Calu3 (cell line): ENCODE measurements at regions of chr5 and their contacts with region 1.

Region 1: GRCh38 chr5:94672746-94673145 is 54.3 kb downstream of the SLF1 start:
- DNase-seq: no peak
- H3K4me3 Mint-ChIP-seq: no peak overlapping the region
- H3K27ac Mint-ChIP-seq: no peak overlapping the region
- H3K4me1 Mint-ChIP-seq: peaks cover 8% of the 10 kb centered on the region
- H3K27me3 Mint-ChIP-seq: no peaks in the 10 kb centered on the region
- CTCF ChIP-seq: no peak

Region 2: GRCh38 chr5:94544031-94544650 is 128.6 kb before region 1 on chr5:
- CTCF ChIA-PET with region 1: no interaction called
- intact Hi-C with region 1: no loop called
- DNase-seq: no peak
- H3K4me3 Mint-ChIP-seq: no peak overlapping the region
- H3K27ac Mint-ChIP-seq: no peak overlapping the region
- H3K4me1 Mint-ChIP-seq: no peaks in the 10 kb centered on the region
- H3K27me3 Mint-ChIP-seq: no peaks in the 10 kb centered on the region
- CTCF ChIP-seq: no peak

Region 3: DNA sequence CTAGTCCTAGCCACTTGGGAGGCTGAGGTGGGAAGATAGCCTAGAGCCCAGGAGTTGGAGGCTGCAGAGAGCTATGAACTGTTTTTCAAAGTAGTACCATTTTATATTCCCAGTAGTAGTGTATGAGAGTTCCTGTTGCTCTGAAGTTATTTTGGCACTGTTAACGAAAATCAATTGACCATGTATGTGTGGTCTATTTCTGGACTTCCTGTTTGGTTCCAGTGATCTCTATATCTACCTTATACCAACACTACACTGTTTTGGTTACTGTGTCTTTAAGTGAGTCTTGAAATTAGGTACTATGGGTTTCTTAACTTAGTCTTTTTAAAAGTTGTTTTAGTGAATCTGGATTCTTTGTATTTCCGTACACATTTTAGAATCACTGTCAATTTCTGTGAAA is 40.7 kb before region 1 on chr5:
- CTCF ChIA-PET with region 1: no interaction called
- intact Hi-C with region 1: loop called (anchors 1 kb)
- DNase-seq: no peak
- H3K4me3 Mint-ChIP-seq: no peak overlapping the region
- H3K27ac Mint-ChIP-seq: no peak overlapping the region
- H3K4me1 Mint-ChIP-seq: no peaks in the 10 kb centered on the region
- H3K27me3 Mint-ChIP-seq: no peaks in the 10 kb centered on the region
- CTCF ChIP-seq: no peak

Region 4: DNA sequence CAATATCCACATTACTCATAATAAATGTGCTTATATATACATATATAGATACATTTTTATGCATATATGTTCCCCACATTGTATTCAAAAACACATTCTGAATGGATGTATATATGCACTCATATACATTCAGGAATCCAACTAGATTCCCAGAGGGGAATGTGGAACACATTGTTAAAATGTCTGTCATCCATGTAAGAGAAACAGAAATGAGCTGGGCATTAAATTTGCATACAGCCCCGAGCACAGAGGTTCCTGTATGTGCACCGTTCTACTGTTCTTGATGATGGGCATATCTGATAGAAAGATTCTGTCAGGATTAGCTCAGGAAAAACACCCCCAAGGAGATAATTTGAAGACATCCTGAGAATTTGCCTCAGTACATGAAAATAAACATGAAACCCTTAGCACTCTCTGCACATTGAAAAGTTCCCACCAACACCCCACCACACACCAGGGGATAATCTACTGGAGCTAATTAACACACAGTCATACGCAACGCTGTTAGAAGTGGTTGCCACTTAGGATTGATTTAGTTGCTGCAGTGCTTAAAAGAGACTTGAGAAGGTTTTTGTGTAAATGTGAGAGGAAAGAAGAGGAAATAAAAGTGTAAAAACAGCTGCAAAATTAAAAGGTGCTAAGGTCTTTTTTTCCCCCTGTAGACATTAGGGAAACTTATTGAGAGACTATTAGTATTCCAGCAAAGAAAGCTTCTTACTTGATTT is 169.0 kb after region 1 on chr5:
- CTCF ChIA-PET with region 1: no interaction called
- intact Hi-C with region 1: no loop called
- DNase-seq: no peak
- H3K4me3 Mint-ChIP-seq: no peak overlapping the region
- H3K27ac Mint-ChIP-seq: no peak overlapping the region
- H3K4me1 Mint-ChIP-seq: no peaks in the 10 kb centered on the region
- H3K27me3 Mint-ChIP-seq: no peaks in the 10 kb centered on the region
- CTCF ChIP-seq: no peak